Heart right ventricle (tissue), 16 donors: ENCODE measurements at regions of chr16 and their contacts with region 1.

Region 1: GRCh38 chr16:49701789-49702494 is 154.0 kb downstream of the ZNF423 start:
- DNase-seq: peak; percentile 53 to 70
- ATAC-seq: peak; percentile 36 to 80 (median 58)
- H3K4me3 ChIP-seq: peak overlapping the region in 1 of 10 donors; percentile 14
- H3K27ac ChIP-seq: peak overlapping the region in 5 of 10 donors; percentile 1 to 81 (median 32)
- H3K4me1 ChIP-seq: peaks cover 18 to 65% (median 41%) of the 10 kb centered on the region in 9 donors
- H3K27me3 ChIP-seq: peaks cover 0 to 23% (median 0%) of the 10 kb centered on the region in 7 donors
- CTCF ChIP-seq: no peak

Region 2: GRCh38 chr16:49292413-49292812 is 409.5 kb before region 1 on chr16:
- intact Hi-C with region 1: no loop called
- DNase-seq: no peak
- ATAC-seq: no peak
- H3K4me3 ChIP-seq: no peak overlapping the region
- H3K27ac ChIP-seq: no peak overlapping the region
- H3K4me1 ChIP-seq: no peaks in the 10 kb centered on the region
- H3K27me3 ChIP-seq: peaks cover 0 to 58% (median 28%) of the 10 kb centered on the region in 7 donors
- CTCF ChIP-seq: no peak

Region 3: DNA sequence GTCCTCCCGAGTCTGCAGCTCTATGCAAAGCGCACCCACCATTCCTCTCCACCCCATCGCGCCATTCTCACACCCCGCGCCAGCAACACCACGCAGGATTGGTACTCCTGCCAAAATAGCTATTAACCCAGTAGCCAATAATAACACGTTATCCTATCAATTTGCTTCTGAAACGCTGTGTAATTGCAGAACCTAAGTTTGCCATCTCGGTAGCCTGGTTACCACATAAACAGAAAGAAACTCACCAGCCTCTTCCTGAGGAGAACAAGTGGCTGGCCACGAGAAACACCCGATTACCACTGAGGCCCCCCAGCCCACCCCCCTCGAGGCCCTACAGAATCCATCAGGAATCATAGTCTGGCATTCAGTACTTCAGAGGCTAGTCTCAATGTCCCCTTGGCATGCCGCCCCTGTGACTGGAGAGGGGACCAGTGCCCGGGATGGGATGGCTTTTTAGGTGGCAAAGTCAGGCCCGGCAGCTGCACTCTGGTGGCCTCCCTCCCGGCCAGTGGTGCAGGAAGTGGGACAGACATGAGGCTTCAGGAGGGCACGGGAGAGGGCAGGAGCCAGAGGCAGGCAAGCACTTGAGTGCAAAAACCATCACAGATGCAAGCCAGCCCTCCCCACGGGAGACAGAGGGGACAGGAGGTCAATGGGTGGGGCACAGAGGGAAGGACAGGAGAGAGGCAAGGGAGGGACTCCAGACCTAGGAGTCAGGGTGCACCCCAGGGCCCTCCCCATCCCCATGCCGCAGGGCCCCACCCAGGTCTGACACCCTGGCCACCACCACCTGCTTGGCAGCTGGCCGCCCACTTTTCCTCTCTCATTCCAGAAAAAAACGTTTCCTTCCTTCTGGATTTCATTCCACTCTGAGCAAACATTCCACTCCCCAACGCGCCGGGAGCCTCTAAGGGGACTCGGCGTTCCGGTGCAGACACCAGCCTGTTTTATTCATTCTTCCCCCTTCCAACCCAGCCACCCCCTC is 38.6 kb before region 1 on chr16:
- intact Hi-C with region 1: loop called in 1 of 10 experiments (anchors 5 kb)
- DNase-seq: peak; percentile 28 to 50
- ATAC-seq: peak; percentile 19 to 61 (median 54)
- H3K4me3 ChIP-seq: peak overlapping the region in 9 of 10 donors; percentile 19 to 53 (median 46)
- H3K27ac ChIP-seq: peak overlapping the region; percentile 36 to 85 (median 77)
- H3K4me1 ChIP-seq: peaks cover 14 to 52% (median 27%) of the 10 kb centered on the region in 9 donors
- H3K27me3 ChIP-seq: no peaks in the 10 kb centered on the region
- CTCF ChIP-seq: no peak

Region 4: DNA sequence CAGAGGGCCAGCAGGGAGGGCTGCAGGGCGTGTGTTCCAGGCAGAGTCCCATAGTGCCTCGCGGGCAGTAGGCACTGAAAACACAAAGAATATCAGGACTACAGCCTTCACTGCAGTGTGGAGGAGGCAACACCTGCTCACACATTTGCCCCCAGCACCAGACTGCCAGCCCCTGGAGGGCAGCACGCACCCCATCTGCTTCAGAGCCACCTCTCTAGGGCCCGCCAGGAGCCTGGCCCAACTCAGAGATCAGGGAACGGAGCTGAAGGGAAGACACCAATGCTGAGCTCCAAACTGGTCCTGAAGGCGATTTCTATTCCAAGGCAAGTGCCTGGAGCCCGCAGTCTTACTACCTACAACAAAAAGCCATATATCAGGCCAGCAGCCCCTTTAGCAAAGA is 23.7 kb after region 1 on chr16:
- intact Hi-C with region 1: no loop called
- DNase-seq: no peak
- ATAC-seq: no peak
- H3K4me3 ChIP-seq: no peak overlapping the region
- H3K27ac ChIP-seq: no peak overlapping the region
- H3K4me1 ChIP-seq: no peaks in the 10 kb centered on the region
- H3K27me3 ChIP-seq: no peaks in the 10 kb centered on the region
- CTCF ChIP-seq: no peak

Region 5: GRCh38 chr16:49740256-49740655 is 38.3 kb after region 1 on chr16:
- intact Hi-C with region 1: loop called in 1 of 10 experiments (anchors 5 kb)
- DNase-seq: no peak
- ATAC-seq: no peak
- H3K4me3 ChIP-seq: no peak overlapping the region
- H3K27ac ChIP-seq: no peak overlapping the region
- H3K4me1 ChIP-seq: peaks cover 0 to 5% (median 0%) of the 10 kb centered on the region in 9 donors
- H3K27me3 ChIP-seq: no peaks in the 10 kb centered on the region
- CTCF ChIP-seq: no peak

Region 6: GRCh38 chr16:49755313-49755620 is 53.3 kb after region 1 on chr16:
- intact Hi-C with region 1: loop called in 1 of 10 experiments (anchors 5 kb)
- DNase-seq: peak in 1 of 2 donors; percentile 30
- ATAC-seq: peak; percentile 51 to 89 (median 77)
- H3K4me3 ChIP-seq: peak overlapping the region in 9 of 10 donors; percentile 30 to 56 (median 44)
- H3K27ac ChIP-seq: peak overlapping the region; percentile 43 to 90 (median 84)
- H3K4me1 ChIP-seq: peaks cover 2 to 51% (median 40%) of the 10 kb centered on the region in 9 donors
- H3K27me3 ChIP-seq: peaks cover 0 to 13% (median 0%) of the 10 kb centered on the region in 7 donors
- CTCF ChIP-seq: peak; percentile 20 to 74 (median 51)

Region 7: GRCh38 chr16:50011707-50012106 is 309.8 kb after region 1 on chr16:
- intact Hi-C with region 1: no loop called
- DNase-seq: no peak
- ATAC-seq: peak in 1 of 8 donors; percentile 37
- H3K4me3 ChIP-seq: no peak overlapping the region
- H3K27ac ChIP-seq: no peak overlapping the region
- H3K4me1 ChIP-seq: no peaks in the 10 kb centered on the region
- H3K27me3 ChIP-seq: no peaks in the 10 kb centered on the region
- CTCF ChIP-seq: no peak